K562 (cell line): ENCODE measurements at regions of chr11 and their contacts with region 1.

Region 1: DNA sequence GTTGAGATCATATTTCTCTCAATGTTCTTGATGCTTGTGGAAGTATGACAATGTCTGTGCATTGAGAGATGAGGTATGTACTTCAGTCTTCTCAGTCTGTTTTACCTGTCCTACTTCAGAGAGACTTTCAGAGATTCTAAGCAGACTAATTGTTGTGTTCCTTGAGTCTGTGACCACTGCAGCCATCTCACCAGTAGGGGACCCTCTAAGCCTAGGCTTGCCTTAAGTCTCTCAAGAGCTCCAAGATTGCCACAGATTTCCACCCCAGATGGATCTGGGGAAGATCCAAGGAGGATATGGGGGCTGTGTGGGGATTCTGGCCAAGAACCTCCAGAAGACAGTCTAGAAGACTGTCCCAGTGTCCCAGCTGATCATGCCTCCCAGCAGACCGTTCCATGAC is 179.9 kb upstream of the PLET1 start:
- DNase-seq: peak in 2 of 4 experiments; percentile 10 to 18
- ATAC-seq: peak; percentile 48; the same call in 1 of the 3 replicates
- H3K4me3 ChIP-seq: no peak overlapping the region
- H3K27ac ChIP-seq: no peak overlapping the region
- H3K4me1 ChIP-seq: no peaks in the 10 kb centered on the region
- H3K27me3 ChIP-seq: no peaks in the 10 kb centered on the region
- CTCF ChIP-seq: peak; percentile 41 to 53 (median 46); a peak in 3 of 6 replicates
- EP300 ChIP-seq: no peak
- POLR2A ChIP-seq: no peak
- RAD21 ChIP-seq: peak in 1 of 2 experiments; percentile 33; a peak in 2 of 4 replicates

Region 2: DNA sequence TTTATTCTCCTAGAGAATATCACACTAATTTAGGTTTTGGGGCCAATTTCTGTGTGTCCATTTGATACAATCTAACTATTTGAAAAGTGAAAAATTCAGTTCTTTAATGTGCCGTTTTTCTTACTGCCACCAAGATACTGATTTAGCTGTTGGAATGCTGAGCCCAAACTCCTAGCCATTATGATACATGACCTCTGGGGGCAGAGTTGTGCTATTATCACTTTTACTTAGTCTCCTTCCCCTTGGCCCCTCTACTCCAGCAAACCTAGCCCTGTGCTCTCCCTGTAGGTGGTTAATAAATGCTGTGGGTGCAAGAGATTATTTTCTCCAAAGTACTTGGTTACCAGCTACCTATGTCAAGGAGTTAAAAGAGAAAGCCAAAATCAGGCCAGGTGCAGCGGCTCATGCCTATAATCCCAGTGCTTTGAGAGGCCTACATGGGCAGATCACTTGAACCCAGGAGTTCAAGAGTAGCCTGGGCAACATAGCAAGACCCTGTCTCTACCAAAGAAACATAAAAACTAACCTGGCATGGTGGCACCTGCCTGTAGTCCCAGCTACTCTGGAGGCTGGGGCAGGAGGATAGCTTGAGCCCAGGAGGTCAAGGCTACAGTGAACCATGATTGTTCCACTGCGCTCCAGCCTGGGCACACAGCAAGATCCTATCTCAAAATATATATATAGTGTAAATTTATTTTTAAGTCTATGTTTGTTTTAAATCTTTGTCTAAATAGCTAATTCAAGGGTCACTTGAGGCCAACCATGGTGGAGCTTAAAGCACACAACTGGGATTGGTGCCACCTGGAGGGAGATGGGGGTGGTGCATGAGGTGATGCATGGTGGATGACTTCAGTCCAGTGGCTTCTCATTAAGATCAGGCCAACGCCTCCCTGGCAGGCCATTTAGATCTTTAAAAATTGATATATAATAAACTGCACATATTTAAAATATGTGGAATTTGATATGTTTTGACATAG is 13.4 kb after region 1 on chr11:
- CTCF ChIA-PET with region 1: no interaction called
- POLR2A ChIA-PET with region 1: no interaction called
- in situ Hi-C with region 1: no loop called
- intact Hi-C with region 1: no loop called
- DNase-seq: peak; percentile 57 to 82 (median 74)
- ATAC-seq: peak; percentile 97
- H3K4me3 ChIP-seq: no peak overlapping the region
- H3K27ac ChIP-seq: no peak overlapping the region
- H3K4me1 ChIP-seq: no peaks in the 10 kb centered on the region
- H3K27me3 ChIP-seq: no peaks in the 10 kb centered on the region
- CTCF ChIP-seq: peak; percentile 64 to 69 (median 66)
- EP300 ChIP-seq: no peak
- POLR2A ChIP-seq: no peak
- RAD21 ChIP-seq: peak in 1 of 2 experiments; percentile 39; a peak in 3 of 4 replicates

Region 3: DNA sequence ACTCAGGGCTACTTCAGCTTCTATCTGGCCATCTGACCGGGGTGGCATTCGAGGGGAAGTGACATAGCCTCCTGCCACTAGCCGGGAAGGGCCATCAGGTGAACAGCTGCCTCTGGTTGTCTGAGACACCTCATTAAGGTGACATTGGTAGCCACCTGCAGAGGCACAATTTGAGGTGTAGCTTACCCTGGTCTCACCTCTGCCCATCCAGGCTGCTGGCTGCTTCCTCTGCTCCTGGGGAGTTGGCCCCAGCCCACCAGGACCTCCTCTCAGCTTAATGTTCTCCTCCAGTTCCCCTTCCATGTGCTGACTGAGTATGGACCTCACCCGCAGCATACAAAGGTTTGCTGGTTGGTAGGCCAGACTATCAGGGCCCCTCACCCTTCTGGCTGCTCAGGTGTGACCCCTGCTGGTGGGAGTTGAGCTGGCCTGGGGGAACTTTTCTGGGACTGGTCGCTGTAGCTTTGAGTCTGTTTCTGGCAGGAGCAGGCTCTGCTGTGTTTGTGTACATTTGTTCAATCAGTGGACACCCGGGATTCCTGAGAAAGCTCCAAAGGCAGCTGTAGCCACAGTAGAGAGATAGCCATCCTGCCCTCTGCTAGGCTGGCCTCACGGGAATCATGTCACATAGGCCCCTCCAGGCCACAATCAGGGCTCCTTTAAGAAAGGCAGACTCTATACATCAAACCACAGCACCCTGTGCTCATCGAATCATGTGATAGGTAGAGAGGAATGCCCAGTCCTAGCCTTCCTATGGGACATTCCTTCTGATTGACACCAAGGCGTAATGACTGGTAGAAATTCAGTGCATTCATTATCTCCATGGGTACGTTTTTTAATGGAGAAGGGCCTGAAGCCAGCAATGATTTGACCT is 115.2 kb after region 1 on chr11:
- CTCF ChIA-PET with region 1: no interaction called
- POLR2A ChIA-PET with region 1: interaction called, 3 read pairs
- in situ Hi-C with region 1: no loop called
- intact Hi-C with region 1: loop called (anchors 5 kb)
- DNase-seq: peak; percentile 55 to 65 (median 59)
- ATAC-seq: peak; percentile 93
- H3K4me3 ChIP-seq: no peak overlapping the region
- H3K27ac ChIP-seq: no peak overlapping the region
- H3K4me1 ChIP-seq: no peaks in the 10 kb centered on the region
- H3K27me3 ChIP-seq: peaks cover 10 to 25% of the 10 kb centered on the region in 2 experiments; a peak in 3 of 5 replicates
- CTCF ChIP-seq: peak; percentile 71 to 85 (median 76)
- EP300 ChIP-seq: no peak
- POLR2A ChIP-seq: no peak
- RAD21 ChIP-seq: peak; percentile 50 to 71